Heart left ventricle (tissue), 16 donors: ENCODE measurements at regions of chr4 and their contacts with region 1.

Region 1: DNA sequence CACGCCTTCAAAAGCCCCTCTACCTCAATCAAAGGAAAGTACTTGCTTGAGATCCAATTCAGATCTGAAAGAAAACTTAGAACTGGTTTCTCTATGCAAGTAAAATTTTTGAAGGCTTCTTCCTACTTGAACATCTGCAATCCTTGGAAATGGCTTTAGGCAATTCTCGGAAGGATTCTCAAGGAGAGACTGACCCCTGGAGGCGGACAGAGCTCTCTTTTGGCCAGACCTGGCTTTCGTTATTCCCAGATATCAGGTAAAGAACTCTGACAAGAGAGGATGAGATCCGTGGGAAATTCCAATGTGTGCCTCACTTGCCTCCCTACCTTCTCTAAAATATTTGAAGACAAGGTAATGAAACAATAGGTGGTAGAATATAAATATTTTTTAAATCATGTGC is 670.3 kb upstream of the FAM241A start:
- DNase-seq: peak in 3 of 5 donors; percentile 12 to 45 (median 20)
- ATAC-seq: peak in 1 of 4 donors; percentile 42
- H3K4me3 ChIP-seq: no peak overlapping the region
- H3K27ac ChIP-seq: no peak overlapping the region
- H3K4me1 ChIP-seq: no peaks in the 10 kb centered on the region
- H3K27me3 ChIP-seq: no peaks in the 10 kb centered on the region
- CTCF ChIP-seq: peak; percentile 22 to 60 (median 46)
- POLR2A ChIP-seq: no peak

Region 2: GRCh38 chr4:110631584-110632505 is 843.2 kb before region 1 on chr4:
- intact Hi-C with region 1: loop called in 8 of 10 experiments (anchors 2 to 10 kb)
- DNase-seq: peak in 4 of 5 donors; percentile 39 to 57 (median 55)
- ATAC-seq: peak; percentile 83 to 97 (median 94)
- H3K4me3 ChIP-seq: peak overlapping the region in 11 of 12 donors; percentile 5 to 39 (median 19)
- H3K27ac ChIP-seq: no peak overlapping the region
- H3K4me1 ChIP-seq: peaks cover 0 to 31% (median 17%) of the 10 kb centered on the region in 12 donors
- H3K27me3 ChIP-seq: peaks cover 76 to 100% (median 100%) of the 10 kb centered on the region in 9 donors
- CTCF ChIP-seq: peak; percentile 35 to 68 (median 57)
- POLR2A ChIP-seq: no peak

Region 3: DNA sequence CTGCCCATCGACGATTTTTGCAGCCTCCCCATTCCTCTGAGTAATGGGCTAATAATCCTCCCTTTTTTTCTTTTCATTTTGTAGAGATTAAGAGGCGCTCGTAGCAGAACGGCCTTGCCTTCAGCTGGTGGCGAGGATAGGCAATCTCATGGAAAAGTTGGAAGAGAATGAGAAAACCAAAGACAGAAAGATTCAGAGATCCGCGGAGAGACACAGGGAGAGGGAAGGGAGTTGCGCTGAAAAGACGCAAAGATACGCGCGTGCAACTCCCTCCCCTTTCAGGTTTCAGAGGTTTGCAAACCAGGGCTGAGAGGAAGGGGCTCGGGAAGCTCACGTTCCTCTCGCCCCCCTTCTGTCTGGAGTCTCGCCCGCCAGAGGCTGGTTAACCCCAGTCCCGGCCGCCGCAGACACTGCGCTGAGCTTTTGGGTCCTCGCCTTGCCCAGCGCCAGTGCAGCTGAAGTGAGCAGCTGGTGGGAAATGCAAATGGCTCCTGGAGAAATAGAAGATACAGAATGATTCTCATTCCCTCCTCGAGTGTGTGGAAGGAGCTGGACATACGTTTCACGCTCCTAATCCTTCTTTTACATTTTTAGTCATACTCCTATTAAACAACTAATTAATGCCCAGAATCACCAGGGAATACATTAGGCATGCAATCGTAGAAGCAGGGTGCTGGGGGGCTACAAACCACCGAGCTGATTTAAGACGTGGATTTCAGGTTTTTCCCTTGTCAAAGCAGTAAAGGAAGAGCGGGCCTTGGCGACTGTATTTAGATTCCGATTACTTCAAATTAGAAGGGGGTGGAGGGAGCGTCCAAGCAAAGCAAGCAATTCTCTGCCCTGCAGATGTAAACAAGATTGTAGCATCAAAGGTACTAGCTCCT is 835.6 kb before region 1 on chr4:
- intact Hi-C with region 1: loop called in 7 of 10 experiments (anchors 5 to 10 kb)
- DNase-seq: no peak
- ATAC-seq: no peak
- H3K4me3 ChIP-seq: no peak overlapping the region
- H3K27ac ChIP-seq: no peak overlapping the region
- H3K4me1 ChIP-seq: peaks cover 0 to 13% (median 5%) of the 10 kb centered on the region in 12 donors
- H3K27me3 ChIP-seq: peaks cover 62 to 100% (median 87%) of the 10 kb centered on the region in 9 donors
- CTCF ChIP-seq: no peak
- POLR2A ChIP-seq: no peak

Region 4: DNA sequence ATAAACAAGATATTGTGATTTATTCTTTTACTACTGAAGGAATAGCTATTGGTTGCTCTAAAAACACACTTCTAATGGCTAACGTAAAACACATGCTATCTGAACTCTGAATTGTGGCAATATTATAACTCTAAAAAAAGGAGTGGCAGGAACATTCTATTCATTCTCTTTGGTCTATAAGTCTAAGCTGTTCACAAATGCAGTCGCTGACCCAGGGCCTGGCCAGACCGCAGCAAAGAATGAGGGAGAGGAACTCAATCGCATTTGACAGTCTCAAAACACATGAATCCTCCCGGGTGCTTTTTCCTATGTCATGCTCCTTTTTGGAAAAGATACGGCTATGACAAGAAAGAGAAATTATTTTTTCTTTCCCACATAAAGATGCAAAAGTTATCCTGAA is 200.5 kb before region 1 on chr4:
- intact Hi-C with region 1: loop called in 1 of 10 experiments (anchors 10 kb)
- DNase-seq: peak in 1 of 5 donors; percentile 21
- ATAC-seq: no peak
- H3K4me3 ChIP-seq: no peak overlapping the region
- H3K27ac ChIP-seq: no peak overlapping the region
- H3K4me1 ChIP-seq: peaks cover 0 to 5% (median 1%) of the 10 kb centered on the region in 12 donors
- H3K27me3 ChIP-seq: no peaks in the 10 kb centered on the region
- CTCF ChIP-seq: no peak
- POLR2A ChIP-seq: no peak

Region 5: DNA sequence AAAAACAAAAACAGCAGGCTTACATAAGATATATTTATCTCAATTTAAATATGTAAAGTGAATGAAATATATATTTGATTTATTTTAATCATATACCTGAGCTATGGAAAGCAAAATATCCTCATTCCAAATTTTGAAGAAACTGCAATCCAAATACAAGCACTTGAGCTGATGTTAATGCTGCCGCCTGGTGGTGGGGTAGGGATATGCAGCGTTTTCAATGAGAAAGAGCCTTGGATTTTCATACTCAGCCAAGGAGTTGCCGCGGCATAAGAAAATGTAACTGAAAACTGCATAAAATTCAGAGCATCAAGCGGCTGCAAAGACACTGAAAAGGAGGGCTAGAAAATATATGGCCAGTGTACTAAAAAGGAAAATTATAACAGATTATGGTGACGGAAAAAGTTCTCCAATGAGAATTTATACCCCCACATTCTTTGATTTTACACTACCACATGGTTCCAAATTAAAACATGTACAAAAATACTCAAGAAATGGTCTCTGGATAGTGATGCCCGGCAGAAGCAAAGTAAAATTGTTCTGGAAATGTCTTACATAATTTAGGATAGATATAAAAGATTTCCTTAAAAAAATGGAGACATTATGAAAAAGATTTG is 191.8 kb before region 1 on chr4:
- intact Hi-C with region 1: loop called in 2 of 10 experiments (anchors 10 kb)
- DNase-seq: peak in 4 of 5 donors; percentile 23 to 56 (median 27)
- ATAC-seq: no peak
- H3K4me3 ChIP-seq: no peak overlapping the region
- H3K27ac ChIP-seq: no peak overlapping the region
- H3K4me1 ChIP-seq: no peaks in the 10 kb centered on the region
- H3K27me3 ChIP-seq: peaks cover 0 to 6% (median 0%) of the 10 kb centered on the region in 9 donors
- CTCF ChIP-seq: peak; percentile 55 to 75 (median 65)
- POLR2A ChIP-seq: no peak